Naive thymus-derived CD4-positive, alpha-beta T cell (primary cell): ENCODE measurements at regions of chr1 and their contacts with region 1.

Region 1: GRCh38 chr1:185281245-185281644 is 35.8 kb downstream of the IVNS1ABP start:
- DNase-seq: peak in 7 of 9 donors; percentile 56 to 81 (median 72)
- ATAC-seq: peak; percentile 92
- H3K4me3 ChIP-seq: peak overlapping the region; percentile 11
- H3K4me3 Mint-ChIP-seq: peak overlapping the region; percentile 62 to 88 (median 75)
- H3K27ac ChIP-seq: peak overlapping the region; percentile 59
- H3K27ac Mint-ChIP-seq: peak overlapping the region; percentile 86 to 100 (median 96)
- H3K4me1 ChIP-seq: peaks cover 23 to 55% of the 10 kb centered on the region in 2 donors
- H3K4me1 Mint-ChIP-seq: peaks cover 40 to 75% (median 71%) of the 10 kb centered on the region in 7 donors
- H3K27me3 ChIP-seq: no peaks in the 10 kb centered on the region
- H3K27me3 Mint-ChIP-seq: no peaks in the 10 kb centered on the region

Region 2: GRCh38 chr1:184222652-184223052 is 1058.6 kb before region 1 on chr1:
- CTCF ChIA-PET with region 1: no interaction called
- POLR2A ChIA-PET with region 1: no interaction called
- intact Hi-C with region 1: no loop called
- DNase-seq: peak in 6 of 9 donors; percentile 11 to 31 (median 26)
- ATAC-seq: peak; percentile 60
- H3K4me3 ChIP-seq: no peak overlapping the region
- H3K4me3 Mint-ChIP-seq: peak overlapping the region in 2 of 10 donors; percentile 3 to 5
- H3K27ac ChIP-seq: no peak overlapping the region
- H3K27ac Mint-ChIP-seq: peak overlapping the region in 1 of 9 donors; percentile 6
- H3K4me1 ChIP-seq: no peaks in the 10 kb centered on the region
- H3K4me1 Mint-ChIP-seq: peaks cover 0 to 4% (median 0%) of the 10 kb centered on the region in 7 donors
- H3K27me3 ChIP-seq: no peaks in the 10 kb centered on the region
- H3K27me3 Mint-ChIP-seq: peaks cover 0 to 19% (median 9%) of the 10 kb centered on the region in 5 donors

Region 3: GRCh38 chr1:185244015-185244747 is 37.1 kb before region 1 on chr1:
- CTCF ChIA-PET with region 1: interaction called, 19 read pairs
- POLR2A ChIA-PET with region 1: interaction called, 33 read pairs
- intact Hi-C with region 1: loop called in 1 of 2 experiments (anchors 5 kb)
- DNase-seq: peak in 1 of 9 donors; percentile 37
- ATAC-seq: peak; percentile 53
- H3K4me3 ChIP-seq: no peak overlapping the region
- H3K4me3 Mint-ChIP-seq: no peak overlapping the region
- H3K27ac ChIP-seq: no peak overlapping the region
- H3K27ac Mint-ChIP-seq: no peak overlapping the region
- H3K4me1 ChIP-seq: peaks cover 7 to 8% of the 10 kb centered on the region in 2 donors
- H3K4me1 Mint-ChIP-seq: peaks cover 4 to 34% (median 26%) of the 10 kb centered on the region in 7 donors
- H3K27me3 ChIP-seq: no peaks in the 10 kb centered on the region
- H3K27me3 Mint-ChIP-seq: no peaks in the 10 kb centered on the region

Region 4: DNA sequence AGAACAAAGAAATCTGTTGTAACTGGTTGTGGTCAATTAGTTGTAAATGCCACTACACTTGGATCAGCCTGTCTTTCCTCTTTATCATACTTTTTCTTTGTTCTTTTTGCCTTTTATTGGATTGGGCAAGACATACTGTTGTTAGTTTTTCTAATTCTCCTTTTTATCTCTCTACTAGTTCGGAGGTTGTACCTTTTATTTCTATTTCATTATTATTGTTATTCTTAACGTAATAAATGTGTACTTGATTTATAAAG is 23.4 kb before region 1 on chr1:
- CTCF ChIA-PET with region 1: no interaction called
- POLR2A ChIA-PET with region 1: interaction called, 4 read pairs
- intact Hi-C with region 1: loop called in 1 of 2 experiments (anchors 2 kb)
- DNase-seq: no peak
- ATAC-seq: no peak
- H3K4me3 ChIP-seq: no peak overlapping the region
- H3K4me3 Mint-ChIP-seq: peak overlapping the region in 9 of 10 donors; percentile 26 to 70 (median 50)
- H3K27ac ChIP-seq: no peak overlapping the region
- H3K27ac Mint-ChIP-seq: peak overlapping the region in 7 of 9 donors; percentile 8 to 84 (median 64)
- H3K4me1 ChIP-seq: peaks cover 0 to 6% of the 10 kb centered on the region in 2 donors
- H3K4me1 Mint-ChIP-seq: peaks cover 5 to 27% (median 20%) of the 10 kb centered on the region in 7 donors
- H3K27me3 ChIP-seq: no peaks in the 10 kb centered on the region
- H3K27me3 Mint-ChIP-seq: peaks cover 0 to 2% (median 0%) of the 10 kb centered on the region in 5 donors

Region 5: DNA sequence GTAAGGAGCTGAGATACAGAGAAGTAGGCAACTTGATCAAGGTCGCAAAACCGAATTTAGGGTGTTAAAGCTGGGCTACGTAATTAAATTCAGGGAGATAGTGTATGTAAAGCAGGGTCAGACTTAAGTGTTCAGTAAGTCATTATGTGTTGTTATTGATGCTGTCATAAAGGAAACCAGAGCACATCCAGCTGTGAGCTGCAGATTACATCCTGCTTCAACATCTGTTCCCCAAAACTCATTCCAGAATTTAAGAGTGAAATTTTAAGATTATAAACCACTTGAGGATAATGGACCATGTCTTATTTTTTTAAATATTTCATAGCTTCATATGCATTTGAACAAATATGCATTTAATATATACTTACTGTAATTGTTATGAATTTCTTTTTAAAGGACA is 13.9 kb before region 1 on chr1:
- CTCF ChIA-PET with region 1: interaction called, 3 read pairs
- POLR2A ChIA-PET with region 1: interaction called, 15 read pairs
- intact Hi-C with region 1: loop called in 1 of 2 experiments (anchors 2 kb)
- DNase-seq: no peak
- ATAC-seq: no peak
- H3K4me3 ChIP-seq: no peak overlapping the region
- H3K4me3 Mint-ChIP-seq: no peak overlapping the region
- H3K27ac ChIP-seq: no peak overlapping the region
- H3K27ac Mint-ChIP-seq: no peak overlapping the region
- H3K4me1 ChIP-seq: no peaks in the 10 kb centered on the region
- H3K4me1 Mint-ChIP-seq: peaks cover 0 to under 1% (median 0%) of the 10 kb centered on the region in 7 donors
- H3K27me3 ChIP-seq: no peaks in the 10 kb centered on the region
- H3K27me3 Mint-ChIP-seq: no peaks in the 10 kb centered on the region

Region 6: DNA sequence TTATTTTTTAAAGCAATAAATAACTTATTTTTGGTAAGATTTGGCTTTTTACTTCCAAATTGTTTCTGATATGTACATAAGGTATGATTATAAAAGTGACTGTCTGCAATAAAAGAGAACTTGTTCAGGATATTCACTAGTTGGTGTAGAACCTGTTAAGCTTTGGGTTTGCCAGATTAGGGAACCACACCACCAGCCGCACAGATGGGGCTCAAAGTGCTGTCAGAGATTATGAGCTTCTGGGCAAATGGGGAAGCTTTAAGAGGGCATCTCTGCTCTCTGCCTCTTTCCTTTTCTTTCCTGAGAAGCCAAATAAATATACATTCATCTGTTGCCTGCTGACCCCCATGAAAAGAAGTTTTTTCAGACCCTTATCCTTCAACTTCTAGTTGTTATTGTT is 10.4 kb after region 1 on chr1:
- CTCF ChIA-PET with region 1: interaction called, 7 read pairs
- POLR2A ChIA-PET with region 1: interaction called, 12 read pairs
- intact Hi-C with region 1: loop called in 1 of 2 experiments (anchors 1 kb)
- DNase-seq: no peak
- ATAC-seq: peak; percentile 54
- H3K4me3 ChIP-seq: no peak overlapping the region
- H3K4me3 Mint-ChIP-seq: no peak overlapping the region
- H3K27ac ChIP-seq: no peak overlapping the region
- H3K27ac Mint-ChIP-seq: peak overlapping the region in 5 of 9 donors; percentile 9 to 88 (median 74)
- H3K4me1 ChIP-seq: peaks cover 0 to 13% of the 10 kb centered on the region in 2 donors
- H3K4me1 Mint-ChIP-seq: peaks cover 11 to 59% (median 43%) of the 10 kb centered on the region in 7 donors
- H3K27me3 ChIP-seq: no peaks in the 10 kb centered on the region
- H3K27me3 Mint-ChIP-seq: no peaks in the 10 kb centered on the region

Region 7: DNA sequence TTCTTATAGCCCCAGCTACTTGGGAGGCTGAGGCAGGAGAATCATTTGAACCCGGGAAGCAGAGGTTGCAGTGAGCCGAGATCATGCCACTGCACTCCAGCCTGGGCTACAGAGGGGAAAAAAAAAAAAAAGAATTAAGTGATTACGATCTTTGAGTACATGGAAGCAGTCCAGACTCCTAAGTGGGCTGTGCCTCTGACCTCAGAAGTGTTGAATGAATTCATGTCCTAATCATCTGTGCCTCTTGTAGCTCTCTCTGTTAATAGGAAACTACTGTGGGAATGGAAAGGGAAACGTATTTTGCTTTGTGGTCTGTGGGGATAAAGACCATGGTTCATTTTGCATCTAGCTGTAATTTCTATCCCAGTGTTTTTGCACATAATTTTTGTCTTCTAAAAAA is 44.2 kb after region 1 on chr1:
- CTCF ChIA-PET with region 1: no interaction called
- POLR2A ChIA-PET with region 1: no interaction called
- intact Hi-C with region 1: no loop called
- DNase-seq: no peak
- ATAC-seq: no peak
- H3K4me3 ChIP-seq: no peak overlapping the region
- H3K4me3 Mint-ChIP-seq: no peak overlapping the region
- H3K27ac ChIP-seq: no peak overlapping the region
- H3K27ac Mint-ChIP-seq: no peak overlapping the region
- H3K4me1 ChIP-seq: no peaks in the 10 kb centered on the region
- H3K4me1 Mint-ChIP-seq: peaks cover 0 to 4% (median 0%) of the 10 kb centered on the region in 7 donors
- H3K27me3 ChIP-seq: no peaks in the 10 kb centered on the region
- H3K27me3 Mint-ChIP-seq: no peaks in the 10 kb centered on the region